ENCODE measurements at regions of chr9 and their contacts with region 1.

Region 1: GRCh38 chr9:97237951-97238851 is 69.3 kb upstream of the CCDC180 start:
- DNase-seq: peak; percentile 54 to 89 (median 71)
- ATAC-seq: peak; percentile 90
- H3K4me3 ChIP-seq: peak overlapping the region; percentile 61
- H3K4me3 Mint-ChIP-seq: peak overlapping the region; percentile 96
- H3K27ac ChIP-seq: peak overlapping the region; percentile 4 to 59
- H3K27ac Mint-ChIP-seq: peak overlapping the region; percentile 91
- H3K4me1 ChIP-seq: peaks cover 13% of the 10 kb centered on the region
- H3K4me1 Mint-ChIP-seq: peaks cover 27% of the 10 kb centered on the region
- H3K27me3 ChIP-seq: no peaks in the 10 kb centered on the region
- H3K27me3 Mint-ChIP-seq: no peaks in the 10 kb centered on the region
- CTCF ChIP-seq: no peak

Region 2: GRCh38 chr9:96777426-96777864 is 460.8 kb before region 1 on chr9:
- CTCF ChIA-PET with region 1: no interaction called
- POLR2A ChIA-PET with region 1: interaction called, 5 read pairs
- intact Hi-C with region 1: loop called in 1 of 2 experiments (anchors 10 kb)
- DNase-seq: peak in 1 of 14 experiments; percentile 24
- ATAC-seq: peak; percentile 40
- H3K4me3 ChIP-seq: peak overlapping the region; percentile 78
- H3K4me3 Mint-ChIP-seq: peak overlapping the region; percentile 99
- H3K27ac ChIP-seq: peak overlapping the region; percentile 78 to 80
- H3K27ac Mint-ChIP-seq: peak overlapping the region; percentile 99
- H3K4me1 ChIP-seq: peaks cover 13% of the 10 kb centered on the region
- H3K4me1 Mint-ChIP-seq: peaks cover 57% of the 10 kb centered on the region
- H3K27me3 ChIP-seq: no peaks in the 10 kb centered on the region
- H3K27me3 Mint-ChIP-seq: no peaks in the 10 kb centered on the region
- CTCF ChIP-seq: no peak

Region 3: DNA sequence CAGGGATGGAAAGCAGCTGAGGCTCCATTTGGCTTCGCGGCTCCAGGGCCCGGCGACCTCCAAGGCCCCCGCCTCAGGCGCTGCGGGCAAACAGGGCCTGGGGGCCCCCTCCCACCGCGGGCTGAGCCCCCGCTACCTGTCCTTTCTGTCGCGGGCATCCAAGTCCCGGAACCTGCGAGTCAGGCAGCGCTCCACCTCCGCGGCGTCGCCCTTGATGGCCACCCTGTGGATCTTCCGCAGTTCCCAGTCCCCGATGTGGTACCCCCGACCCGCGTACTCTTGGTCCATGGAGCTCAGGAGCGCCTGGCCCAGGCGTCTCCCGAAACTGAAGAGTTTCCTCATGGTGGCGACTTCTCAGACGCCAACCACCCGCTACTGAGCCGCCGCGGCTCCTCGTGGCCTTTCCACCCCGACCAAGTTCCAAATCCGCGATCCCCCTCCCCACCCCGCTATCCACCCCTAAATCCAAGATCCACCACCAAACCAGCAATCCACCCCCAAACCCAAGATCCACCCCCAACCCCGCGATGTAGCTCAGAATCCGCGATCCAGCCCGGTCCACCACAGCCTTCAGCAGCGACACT is 17.2 kb before region 1 on chr9:
- CTCF ChIA-PET with region 1: interaction called, 3 read pairs
- POLR2A ChIA-PET with region 1: interaction called, 15 read pairs
- intact Hi-C with region 1: no loop called
- DNase-seq: peak in 2 of 14 experiments; percentile 0 to 14
- ATAC-seq: peak; percentile 19
- H3K4me3 ChIP-seq: peak overlapping the region; percentile 40
- H3K4me3 Mint-ChIP-seq: peak overlapping the region; percentile 77
- H3K27ac ChIP-seq: no peak overlapping the region
- H3K27ac Mint-ChIP-seq: no peak overlapping the region
- H3K4me1 ChIP-seq: peaks cover 18% of the 10 kb centered on the region
- H3K4me1 Mint-ChIP-seq: peaks cover 5% of the 10 kb centered on the region
- H3K27me3 ChIP-seq: peaks cover 11 to 25% of the 10 kb centered on the region in 2 experiments
- H3K27me3 Mint-ChIP-seq: peaks cover 58% of the 10 kb centered on the region
- CTCF ChIP-seq: no peak

Measured in CD4-positive, alpha-beta T cell (primary cell).